ENCODE measurements at regions of chr2 and their contacts with region 1.

Region 1: GRCh38 chr2:27123302-27124231 is at the start of gene ABHD1:
- DNase-seq: peak; percentile 59
- ATAC-seq: peak; percentile 78
- H3K4me3 ChIP-seq: peak within 1 kb of the TSS; percentile 46 to 80 (median 62)
- H3K27ac ChIP-seq: no peak within 1 kb of the TSS
- H3K4me1 ChIP-seq: peaks cover 60% of the 10 kb centered on the region
- H3K27me3 ChIP-seq: peaks cover 2 to 42% of the 10 kb centered on the region in 2 experiments; a peak in 4 of 5 replicates
- CTCF ChIP-seq: peak; percentile 73
- EP300 ChIP-seq: no peak
- POLR2A ChIP-seq: peak; percentile 27 to 90
- RAD21 ChIP-seq: 0 out of 2 replicates have a peak, but pooled peaks have one; percentile 45
- total RNA-seq, gene ABHD1: 0.04 TPM in 1 of 2 replicates, not detected in the other

Region 2: DNA sequence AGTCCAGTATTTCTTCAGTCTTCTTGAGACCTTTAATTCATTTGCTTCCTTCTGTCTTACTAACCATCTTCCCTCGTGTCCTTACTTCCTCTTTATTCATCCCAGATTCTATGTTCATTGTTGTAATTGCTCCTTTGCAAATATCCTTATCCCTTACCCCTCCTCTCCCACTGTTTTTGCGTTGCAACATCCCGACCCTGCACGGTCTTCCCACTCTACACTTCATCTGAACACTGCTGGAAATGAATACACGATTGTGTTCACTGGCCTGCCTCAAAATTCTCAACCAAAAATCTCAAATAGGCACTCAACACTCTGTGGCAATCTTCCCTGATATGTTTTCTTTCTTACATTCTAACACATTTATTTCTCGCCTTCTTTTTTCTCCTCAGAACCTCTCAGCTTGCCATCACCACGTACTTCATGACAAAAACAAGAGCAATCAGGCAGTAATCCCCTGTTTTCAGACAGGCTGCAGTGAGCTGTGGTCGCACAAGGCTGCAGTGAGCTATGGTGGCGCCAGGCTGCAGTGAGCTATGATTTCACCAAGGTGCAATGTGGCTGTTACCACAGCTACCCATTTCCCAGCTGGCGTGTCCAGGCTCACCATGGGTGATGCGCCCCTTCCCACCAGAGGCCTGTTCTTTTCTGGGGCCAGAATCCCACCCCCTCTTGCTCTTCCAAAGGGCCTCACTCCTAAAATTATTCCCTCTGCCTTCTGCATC is 50.9 kb after region 1 on chr2:
- CTCF ChIA-PET with region 1: no interaction called
- POLR2A ChIA-PET with region 1: interaction called, 11 read pairs
- in situ Hi-C with region 1: no loop called
- intact Hi-C with region 1: no loop called
- DNase-seq: no peak
- ATAC-seq: no peak
- H3K4me3 ChIP-seq: no peak overlapping the region
- H3K27ac ChIP-seq: peak overlapping the region; percentile 43
- H3K4me1 ChIP-seq: peaks cover 98% of the 10 kb centered on the region
- H3K27me3 ChIP-seq: no peaks in the 10 kb centered on the region
- CTCF ChIP-seq: no peak
- EP300 ChIP-seq: no peak
- POLR2A ChIP-seq: no peak
- RAD21 ChIP-seq: no peak

Measured in HepG2 (cell line).